PC-3 (cell line): ENCODE measurements at regions of chr13 and their contacts with region 1.

Region 1: DNA sequence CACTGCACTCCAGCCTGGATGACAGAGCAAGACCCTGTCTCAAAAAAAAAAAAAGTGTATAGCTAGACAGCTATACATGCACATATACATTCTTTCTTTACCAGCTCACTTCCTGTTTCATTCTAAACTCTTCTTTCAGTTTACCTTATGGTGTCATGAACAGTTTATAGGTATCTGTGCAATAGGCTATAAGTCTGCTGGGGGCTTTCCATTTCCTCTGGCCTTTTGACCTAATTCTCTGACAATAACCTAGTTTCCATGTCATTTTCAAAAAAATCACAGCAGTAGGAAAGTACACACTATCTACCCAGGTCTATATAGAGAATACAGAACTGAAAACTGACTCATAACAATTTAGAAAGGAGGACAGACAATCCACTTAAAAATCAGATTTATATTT is 24.4 kb upstream of the URAD start:
- DNase-seq: peak; percentile 69
- ATAC-seq: peak; percentile 42
- H3K4me3 ChIP-seq: no peak overlapping the region
- H3K27ac ChIP-seq: peak overlapping the region; percentile 53
- H3K4me1 ChIP-seq: peaks cover 15% of the 10 kb centered on the region
- H3K27me3 ChIP-seq: 0 out of 2 replicates have a peak, but pooled peaks cover 4% of the 10 kb centered on the region
- CTCF ChIP-seq: no peak

Region 2: DNA sequence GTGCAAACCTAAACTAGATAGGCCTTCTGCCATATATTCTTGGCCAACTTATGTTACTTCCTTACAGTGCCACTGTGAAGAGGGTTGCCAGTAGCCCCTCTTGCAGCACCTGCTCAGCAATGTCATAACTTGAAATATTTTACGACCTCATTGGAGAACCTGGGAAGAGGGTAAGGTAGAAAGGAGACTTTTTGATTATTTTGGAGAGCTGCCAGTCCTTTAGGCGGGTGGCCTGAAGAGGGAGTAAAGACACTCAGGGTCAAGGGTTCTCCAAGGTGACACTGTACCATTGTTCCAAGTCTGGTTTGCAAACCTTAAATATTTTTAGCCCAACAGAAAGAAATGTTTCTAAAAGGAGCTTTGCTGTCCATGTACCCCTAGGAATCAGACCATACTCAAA is 363.7 kb after region 1 on chr13:
- CTCF ChIA-PET with region 1: no interaction called
- POLR2A ChIA-PET with region 1: interaction called, 10 read pairs
- intact Hi-C with region 1: no loop called
- DNase-seq: no peak
- ATAC-seq: no peak
- H3K4me3 ChIP-seq: no peak overlapping the region
- H3K27ac ChIP-seq: no peak overlapping the region
- H3K4me1 ChIP-seq: no peaks in the 10 kb centered on the region
- H3K27me3 ChIP-seq: peaks cover 43% of the 10 kb centered on the region
- CTCF ChIP-seq: no peak